ENCODE measurements at regions of chr17 and their contacts with region 1.

Region 1: DNA sequence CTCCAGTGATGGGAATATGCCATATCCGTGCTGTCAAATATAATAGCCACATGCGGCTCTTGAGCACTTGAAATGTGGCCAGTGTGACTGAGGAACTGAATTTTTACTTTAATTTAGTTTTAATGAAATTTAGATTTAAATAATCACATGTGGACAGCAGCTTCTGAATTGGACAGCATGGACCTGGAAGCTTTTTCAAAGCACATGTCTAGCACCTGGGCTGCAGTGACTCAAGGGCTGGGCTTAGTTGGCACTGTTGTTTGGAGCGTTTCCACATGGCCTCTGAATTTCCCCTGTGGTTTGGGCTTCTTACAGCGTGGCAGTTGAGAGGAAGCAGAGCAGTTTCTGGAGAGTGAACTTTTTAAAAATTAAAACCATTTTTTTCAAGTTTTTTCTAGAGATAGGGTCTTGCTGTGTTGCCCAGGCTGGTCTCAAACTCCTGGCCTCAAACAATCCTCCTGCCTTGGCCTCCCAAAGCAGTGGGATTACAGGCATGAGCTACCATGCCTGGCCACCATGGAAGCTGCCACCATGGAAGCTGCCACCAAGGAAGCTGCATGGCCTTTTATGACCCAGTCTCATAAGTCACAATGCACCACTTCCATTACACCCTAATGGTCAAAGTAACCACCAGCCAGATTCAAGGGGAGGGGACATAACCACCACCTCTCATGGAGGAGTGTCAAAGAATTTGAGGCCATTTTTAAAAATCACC is 6.7 kb upstream of the TOB1 start:
- DNase-seq: peak in 8 of 9 donors; percentile 38 to 68 (median 45)
- ATAC-seq: peak; percentile 78
- H3K4me3 ChIP-seq: no peak overlapping the region
- H3K4me3 Mint-ChIP-seq: peak overlapping the region in 8 of 10 donors; percentile 25 to 73 (median 56)
- H3K27ac ChIP-seq: peak overlapping the region; percentile 3
- H3K27ac Mint-ChIP-seq: peak overlapping the region in 7 of 9 donors; percentile 2 to 81 (median 69)
- H3K4me1 ChIP-seq: peaks cover 28 to 51% of the 10 kb centered on the region in 2 donors
- H3K4me1 Mint-ChIP-seq: peaks cover 25 to 63% (median 49%) of the 10 kb centered on the region in 7 donors
- H3K27me3 ChIP-seq: peaks cover 0 to 6% of the 10 kb centered on the region in 2 donors
- H3K27me3 Mint-ChIP-seq: peaks cover 0 to 28% (median 0%) of the 10 kb centered on the region in 5 donors

Region 2: GRCh38 chr17:50883850-50884438 is 11.1 kb after region 1 on chr17:
- CTCF ChIA-PET with region 1: interaction called, 4 read pairs
- POLR2A ChIA-PET with region 1: interaction called, 143 read pairs
- intact Hi-C with region 1: loop called in 1 of 2 experiments (anchors 1 kb)
- DNase-seq: no peak
- ATAC-seq: peak; percentile 79
- H3K4me3 ChIP-seq: no peak overlapping the region
- H3K4me3 Mint-ChIP-seq: no peak overlapping the region
- H3K27ac ChIP-seq: peak overlapping the region; percentile 10
- H3K27ac Mint-ChIP-seq: peak overlapping the region; percentile 7 to 92 (median 54)
- H3K4me1 ChIP-seq: peaks cover 0 to 16% of the 10 kb centered on the region in 2 donors
- H3K4me1 Mint-ChIP-seq: peaks cover 24 to 46% (median 36%) of the 10 kb centered on the region in 7 donors
- H3K27me3 ChIP-seq: no peaks in the 10 kb centered on the region
- H3K27me3 Mint-ChIP-seq: peaks cover 0 to 19% (median 0%) of the 10 kb centered on the region in 5 donors

Region 3: GRCh38 chr17:50909765-50910605 is 37.1 kb after region 1 on chr17:
- CTCF ChIA-PET with region 1: interaction called, 3 read pairs
- POLR2A ChIA-PET with region 1: interaction called, 828 read pairs
- intact Hi-C with region 1: loop called in 1 of 2 experiments (anchors 1 kb)
- DNase-seq: peak in 7 of 9 donors; percentile 67 to 87 (median 81)
- ATAC-seq: peak; percentile 92
- H3K4me3 ChIP-seq: peak overlapping the region; percentile 46
- H3K4me3 Mint-ChIP-seq: peak overlapping the region; percentile 29 to 84 (median 66)
- H3K27ac ChIP-seq: peak overlapping the region; percentile 75
- H3K27ac Mint-ChIP-seq: peak overlapping the region; percentile 87 to 99 (median 98)
- H3K4me1 ChIP-seq: peaks cover 50 to 69% of the 10 kb centered on the region in 2 donors
- H3K4me1 Mint-ChIP-seq: peaks cover 41 to 78% (median 67%) of the 10 kb centered on the region in 7 donors
- H3K27me3 ChIP-seq: no peaks in the 10 kb centered on the region
- H3K27me3 Mint-ChIP-seq: peaks cover 0 to 2% (median 0%) of the 10 kb centered on the region in 5 donors

Region 4: GRCh38 chr17:50931144-50931908 is 58.5 kb after region 1 on chr17:
- CTCF ChIA-PET with region 1: interaction called, 3 read pairs
- POLR2A ChIA-PET with region 1: interaction called, 828 read pairs
- intact Hi-C with region 1: no loop called
- DNase-seq: peak in 8 of 9 donors; percentile 47 to 73 (median 60)
- ATAC-seq: peak; percentile 69
- H3K4me3 ChIP-seq: peak overlapping the region; percentile 69
- H3K4me3 Mint-ChIP-seq: peak overlapping the region; percentile 84 to 97 (median 92)
- H3K27ac ChIP-seq: peak overlapping the region; percentile 63
- H3K27ac Mint-ChIP-seq: peak overlapping the region; percentile 77 to 100 (median 96)
- H3K4me1 ChIP-seq: peaks cover 20 to 21% of the 10 kb centered on the region in 2 donors
- H3K4me1 Mint-ChIP-seq: peaks cover 17 to 53% (median 33%) of the 10 kb centered on the region in 7 donors
- H3K27me3 ChIP-seq: no peaks in the 10 kb centered on the region
- H3K27me3 Mint-ChIP-seq: peaks cover 0 to 25% (median 0%) of the 10 kb centered on the region in 5 donors

Region 5: DNA sequence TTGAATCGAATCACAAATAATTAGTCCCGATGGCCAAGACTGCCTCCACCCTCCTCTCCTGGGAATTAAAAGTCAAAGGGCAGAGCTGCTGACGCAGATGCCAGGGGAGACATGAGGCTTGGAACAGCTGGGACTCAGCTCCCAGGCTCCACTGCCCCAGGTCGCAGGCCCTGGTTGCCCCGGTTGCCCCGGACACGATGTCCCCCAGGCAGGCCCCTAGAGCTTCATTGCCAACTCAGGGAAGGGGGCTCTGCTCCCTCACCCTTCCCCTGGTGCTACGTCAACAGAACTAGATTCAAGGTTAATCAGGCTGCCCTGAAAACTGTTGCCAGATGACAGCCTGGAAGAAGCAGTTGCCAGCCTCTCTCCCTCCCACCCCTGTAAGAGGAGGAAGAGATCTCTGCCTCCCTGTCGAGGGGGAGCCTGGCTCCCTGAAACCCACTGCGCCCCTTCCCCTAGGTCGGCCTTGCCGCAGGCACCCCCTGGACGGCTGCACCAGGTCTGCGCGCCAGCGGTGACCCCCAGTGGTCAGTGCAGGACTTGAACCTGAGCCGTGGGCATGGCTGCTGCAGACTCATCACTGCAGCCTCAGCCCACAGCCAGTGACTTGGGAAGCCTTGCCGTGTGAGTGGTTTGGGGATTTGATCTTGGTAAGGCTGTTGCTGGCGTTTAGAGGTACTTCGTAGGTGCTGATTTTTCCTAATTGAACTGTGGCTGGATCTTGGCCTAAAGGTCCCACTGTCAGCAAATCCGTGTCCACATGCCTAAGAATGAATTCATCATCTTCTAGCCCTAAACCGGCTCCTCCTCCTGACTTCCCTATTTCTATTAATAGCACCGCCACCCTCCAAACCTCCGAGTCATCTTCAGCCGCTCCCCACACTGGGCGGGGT is 77.4 kb after region 1 on chr17:
- CTCF ChIA-PET with region 1: interaction called, 33 read pairs
- POLR2A ChIA-PET with region 1: interaction called, 664 read pairs
- intact Hi-C with region 1: loop called (anchors 1 to 5 kb)
- DNase-seq: peak; percentile 34 to 71 (median 51)
- ATAC-seq: peak; percentile 88
- H3K4me3 ChIP-seq: no peak overlapping the region
- H3K4me3 Mint-ChIP-seq: peak overlapping the region in 2 of 10 donors; percentile 5 to 62
- H3K27ac ChIP-seq: no peak overlapping the region
- H3K27ac Mint-ChIP-seq: peak overlapping the region in 5 of 9 donors; percentile 31 to 90 (median 69)
- H3K4me1 ChIP-seq: peaks cover 0 to 6% of the 10 kb centered on the region in 2 donors
- H3K4me1 Mint-ChIP-seq: peaks cover 14 to 39% (median 24%) of the 10 kb centered on the region in 7 donors
- H3K27me3 ChIP-seq: no peaks in the 10 kb centered on the region
- H3K27me3 Mint-ChIP-seq: no peaks in the 10 kb centered on the region